Activated CD4-positive, alpha-beta memory T cell treated with anti-CD3 and anti-CD28 coated beads, Interleukin-2, amount 10 ng/mL, durations not matched to agents 7 days and 5 days (primary cell): ENCODE measurements at regions of chr14 and their contacts with region 1.

Region 1: DNA sequence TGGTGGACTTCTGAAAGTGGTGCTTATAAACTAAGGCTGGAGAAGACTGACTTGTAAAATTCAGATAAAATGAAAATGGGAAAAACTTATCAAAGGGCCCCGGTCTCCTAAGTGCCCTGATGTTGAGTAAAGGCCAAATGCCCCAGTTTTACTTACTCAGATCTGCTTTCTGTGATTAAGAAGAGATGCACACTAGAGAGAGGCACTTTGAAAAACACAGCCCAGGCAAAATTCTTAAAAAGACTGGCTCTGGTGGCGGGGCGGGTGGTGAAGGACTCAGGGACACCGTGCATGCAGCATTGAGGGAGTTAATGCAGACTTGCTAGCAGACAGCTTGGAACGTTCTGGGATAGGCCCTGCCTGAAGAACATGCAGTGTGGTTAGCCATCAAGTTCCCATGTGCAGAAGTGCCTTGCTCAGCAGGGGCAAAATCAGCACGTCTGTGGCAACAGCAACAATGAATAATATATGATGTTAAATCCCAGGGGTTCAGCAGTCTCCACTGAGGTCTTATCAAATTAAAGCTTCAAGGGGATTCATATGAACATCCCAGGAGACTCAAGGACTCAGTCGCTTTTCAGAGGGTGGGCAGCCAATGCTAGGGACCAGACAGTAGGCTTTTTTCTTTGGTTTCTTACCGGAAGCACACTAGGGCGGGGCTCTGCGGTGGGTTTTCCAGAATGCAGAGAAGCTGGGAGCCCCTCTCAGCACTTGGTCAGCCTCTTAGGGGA is 105.0 kb downstream of the DAD1 start:
- DNase-seq: no peak
- H3K4me3 Mint-ChIP-seq: peak overlapping the region; percentile 80
- H3K27ac Mint-ChIP-seq: peak overlapping the region; percentile 85
- H3K4me1 Mint-ChIP-seq: peaks cover 11% of the 10 kb centered on the region
- H3K27me3 Mint-ChIP-seq: no peaks in the 10 kb centered on the region

Region 2: DNA sequence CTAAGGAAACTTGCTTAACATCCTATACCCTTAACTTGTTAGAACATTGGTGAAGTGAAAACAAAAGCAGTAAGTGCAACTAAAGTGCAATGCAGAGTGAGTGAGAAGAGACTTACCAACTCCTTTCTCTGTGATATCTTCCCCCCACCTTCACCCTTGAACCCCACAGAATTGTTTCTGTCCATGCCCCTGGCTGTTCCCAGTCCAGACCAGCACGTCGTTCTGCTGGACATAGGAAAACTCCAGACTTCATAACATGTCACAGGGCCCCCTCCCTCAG is 13.1 kb after region 1 on chr14:
- CTCF ChIA-PET with region 1: no interaction called
- POLR2A ChIA-PET with region 1: interaction called, 559 read pairs
- DNase-seq: no peak
- H3K4me3 Mint-ChIP-seq: peak overlapping the region; percentile 80
- H3K27ac Mint-ChIP-seq: peak overlapping the region; percentile 92
- H3K4me1 Mint-ChIP-seq: peaks cover 43% of the 10 kb centered on the region
- H3K27me3 Mint-ChIP-seq: no peaks in the 10 kb centered on the region

Region 3: GRCh38 chr14:22505697-22506377 is 21.8 kb after region 1 on chr14:
- CTCF ChIA-PET with region 1: no interaction called
- POLR2A ChIA-PET with region 1: interaction called, 559 read pairs
- DNase-seq: no peak
- H3K4me3 Mint-ChIP-seq: peak overlapping the region; percentile 83
- H3K27ac Mint-ChIP-seq: peak overlapping the region; percentile 90
- H3K4me1 Mint-ChIP-seq: peaks cover 79% of the 10 kb centered on the region
- H3K27me3 Mint-ChIP-seq: no peaks in the 10 kb centered on the region